ENCODE measurements at regions of chr2 and their contacts with region 1.

Region 1: GRCh38 chr2:176126929-176127773 is 2.4 kb upstream of the HOXD8 start:
- DNase-seq: peak in 2 of 3 donors; percentile 51 to 68
- ATAC-seq: peak; percentile 43 to 67 (median 64)
- H3K4me3 ChIP-seq: no peak overlapping the region
- H3K27ac ChIP-seq: no peak overlapping the region
- H3K4me1 ChIP-seq: peaks cover 0 to 15% (median 0%) of the 10 kb centered on the region in 4 donors
- H3K27me3 ChIP-seq: peaks cover 21 to 74% of the 10 kb centered on the region in 2 donors
- CTCF ChIP-seq: peak; percentile 83 to 93 (median 89)
- POLR2A ChIP-seq: no peak

Region 2: GRCh38 chr2:176643646-176644045 is 516.5 kb after region 1 on chr2:
- intact Hi-C with region 1: loop called in 1 of 2 experiments (anchors 5 kb)
- DNase-seq: peak in 1 of 3 donors; percentile 45
- ATAC-seq: peak; percentile 30 to 50 (median 39)
- H3K4me3 ChIP-seq: no peak overlapping the region
- H3K27ac ChIP-seq: no peak overlapping the region
- H3K4me1 ChIP-seq: no peaks in the 10 kb centered on the region
- H3K27me3 ChIP-seq: peaks cover 3 to 17% of the 10 kb centered on the region in 2 donors
- CTCF ChIP-seq: no peak
- POLR2A ChIP-seq: no peak

Region 3: DNA sequence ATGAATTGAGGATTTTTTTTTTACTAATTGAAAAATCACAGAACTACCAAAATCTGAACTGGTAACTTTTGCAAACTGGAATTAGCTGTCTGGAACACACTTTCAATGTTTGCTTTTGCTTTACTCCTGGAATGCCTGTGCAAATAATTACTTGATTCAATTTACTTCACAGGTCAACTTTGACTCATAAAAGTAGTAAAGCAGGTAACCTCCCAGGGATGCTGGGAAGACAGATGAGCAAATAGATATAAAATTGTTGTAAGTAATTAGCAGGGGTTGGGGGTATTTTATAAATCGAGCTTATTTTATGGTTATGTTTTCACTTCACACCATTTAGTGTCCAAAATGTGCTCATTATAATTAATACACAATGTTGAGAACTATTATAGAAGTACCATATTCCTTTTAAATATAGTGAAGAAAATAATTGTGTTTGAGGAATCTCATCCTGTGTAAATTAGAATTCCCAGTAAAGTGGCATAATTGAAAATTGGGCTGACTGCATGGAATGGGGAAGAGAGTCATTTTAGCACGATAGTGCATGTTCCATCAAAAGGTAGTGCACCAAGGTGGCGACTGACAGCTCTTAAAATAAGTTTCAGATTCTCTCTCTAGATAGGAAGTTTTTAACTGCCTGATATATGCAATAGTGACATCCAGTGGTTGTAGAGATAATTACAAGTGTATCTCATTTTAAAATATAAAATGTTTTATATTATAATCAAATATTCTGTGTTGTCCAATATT is 687.3 kb after region 1 on chr2:
- intact Hi-C with region 1: loop called in 1 of 2 experiments (anchors 10 kb)
- DNase-seq: no peak
- ATAC-seq: peak; percentile 67 to 86 (median 71)
- H3K4me3 ChIP-seq: no peak overlapping the region
- H3K27ac ChIP-seq: no peak overlapping the region
- H3K4me1 ChIP-seq: no peaks in the 10 kb centered on the region
- H3K27me3 ChIP-seq: no peaks in the 10 kb centered on the region
- CTCF ChIP-seq: peak; percentile 53 to 70 (median 66)
- POLR2A ChIP-seq: no peak

Region 4: GRCh38 chr2:176830362-176830761 is 703.2 kb after region 1 on chr2:
- intact Hi-C with region 1: loop called in 1 of 2 experiments (anchors 10 kb)
- DNase-seq: no peak
- ATAC-seq: peak in 2 of 4 donors; percentile 23 to 35
- H3K4me3 ChIP-seq: no peak overlapping the region
- H3K27ac ChIP-seq: no peak overlapping the region
- H3K4me1 ChIP-seq: no peaks in the 10 kb centered on the region
- H3K27me3 ChIP-seq: peaks cover 0 to 4% of the 10 kb centered on the region in 2 donors
- CTCF ChIP-seq: peak in 2 of 4 donors; percentile 13 to 14
- POLR2A ChIP-seq: no peak

Measured in right lobe of liver (tissue), 6 donors.